ENCODE measurements at regions of chr6 and their contacts with region 1.

Region 1: DNA sequence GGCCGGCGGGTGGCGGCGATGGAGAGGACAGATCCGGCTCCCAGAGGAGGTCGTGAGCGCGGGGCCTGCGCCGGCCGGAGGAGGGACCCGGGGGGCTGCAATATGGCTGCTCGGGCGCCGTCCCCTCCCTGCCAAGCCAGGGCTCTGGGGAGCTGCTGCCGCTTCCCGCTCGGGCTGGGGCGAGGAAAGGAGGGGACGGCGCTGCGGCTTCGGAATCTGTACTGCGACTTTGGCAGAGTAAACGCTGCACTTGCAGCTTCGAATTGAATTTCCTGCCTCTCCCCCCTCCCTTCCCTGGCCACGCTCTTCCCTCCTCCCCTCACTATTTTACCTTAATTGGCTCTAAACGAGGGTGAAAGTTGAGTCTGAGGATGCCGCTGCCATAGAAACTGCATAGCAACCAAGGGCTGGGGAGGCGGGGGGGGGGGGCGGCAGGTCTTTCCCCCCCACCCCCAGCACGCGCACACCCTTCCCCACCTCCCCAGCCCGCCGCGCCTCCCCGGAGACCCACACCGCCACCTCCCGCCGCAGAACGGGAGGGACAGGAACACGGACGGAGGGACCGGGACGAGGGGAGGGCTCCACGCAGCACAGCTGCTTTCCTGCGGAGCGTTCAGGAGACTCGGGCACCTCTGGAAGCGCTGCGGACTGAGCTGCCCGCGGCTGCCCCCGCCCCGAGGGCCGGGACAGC is 93.9 kb downstream of the RNASET2 start:
- DNase-seq: peak; percentile 13 to 59 (median 34)
- ATAC-seq: peak; percentile 85
- H3K4me3 ChIP-seq: peak overlapping the region; percentile 47
- H3K4me3 Mint-ChIP-seq: peak overlapping the region; percentile 70 to 95 (median 90)
- H3K27ac ChIP-seq: peak overlapping the region; percentile 6
- H3K27ac Mint-ChIP-seq: peak overlapping the region in 4 of 9 donors; percentile 31 to 79 (median 62)
- H3K4me1 ChIP-seq: peaks cover 3 to 4% of the 10 kb centered on the region in 2 donors
- H3K4me1 Mint-ChIP-seq: peaks cover 7 to 24% (median 8%) of the 10 kb centered on the region in 7 donors
- H3K27me3 ChIP-seq: no peaks in the 10 kb centered on the region
- H3K27me3 Mint-ChIP-seq: peaks cover 0 to 40% (median 7%) of the 10 kb centered on the region in 5 donors

Region 2: DNA sequence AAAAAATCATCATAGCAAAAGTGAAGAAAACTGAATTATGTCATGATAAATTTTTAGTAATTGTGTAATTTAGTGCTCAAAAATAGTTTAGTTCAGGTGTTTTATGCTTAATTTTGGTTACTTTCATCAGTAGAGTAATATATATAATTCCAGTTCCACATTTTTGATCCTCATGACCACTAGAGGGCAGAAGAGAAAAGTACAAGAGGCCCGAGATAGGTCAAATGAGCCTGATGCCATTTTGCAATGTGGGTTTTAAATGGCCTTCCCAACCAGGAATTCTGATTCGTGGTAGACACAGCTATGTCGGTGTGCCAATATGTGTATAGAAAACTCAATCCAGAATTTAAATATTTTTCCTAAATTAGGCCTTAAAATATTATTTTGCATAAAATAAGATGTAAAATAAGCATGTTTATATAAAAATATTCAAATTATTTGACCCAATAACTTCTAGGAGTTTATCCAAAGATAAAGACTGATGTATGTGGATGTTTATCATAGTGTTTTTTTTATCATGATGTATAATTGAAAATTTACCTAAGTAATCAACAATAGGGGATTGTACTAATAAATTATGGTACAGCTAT is 75.6 kb before region 1 on chr6:
- CTCF ChIA-PET with region 1: no interaction called
- POLR2A ChIA-PET with region 1: no interaction called
- intact Hi-C with region 1: loop called in 1 of 2 experiments (anchors 1 kb)
- DNase-seq: peak in 7 of 9 donors; percentile 42 to 70 (median 59)
- ATAC-seq: peak; percentile 78
- H3K4me3 ChIP-seq: no peak overlapping the region
- H3K4me3 Mint-ChIP-seq: no peak overlapping the region
- H3K27ac ChIP-seq: no peak overlapping the region
- H3K27ac Mint-ChIP-seq: no peak overlapping the region
- H3K4me1 ChIP-seq: no peaks in the 10 kb centered on the region
- H3K4me1 Mint-ChIP-seq: no peaks in the 10 kb centered on the region
- H3K27me3 ChIP-seq: no peaks in the 10 kb centered on the region
- H3K27me3 Mint-ChIP-seq: peaks cover 0 to 13% (median 0%) of the 10 kb centered on the region in 5 donors

Region 3: GRCh38 chr6:166907373-166907841 is 45.0 kb after region 1 on chr6:
- CTCF ChIA-PET with region 1: no interaction called
- POLR2A ChIA-PET with region 1: no interaction called
- intact Hi-C with region 1: loop called in 1 of 2 experiments (anchors 5 kb)
- DNase-seq: peak in 3 of 9 donors; percentile 7 to 30 (median 14)
- ATAC-seq: peak; percentile 53
- H3K4me3 ChIP-seq: peak overlapping the region; percentile 27
- H3K4me3 Mint-ChIP-seq: peak overlapping the region; percentile 33 to 72 (median 56)
- H3K27ac ChIP-seq: no peak overlapping the region
- H3K27ac Mint-ChIP-seq: peak overlapping the region; percentile 36 to 89 (median 74)
- H3K4me1 ChIP-seq: peaks cover 9 to 14% of the 10 kb centered on the region in 2 donors
- H3K4me1 Mint-ChIP-seq: peaks cover 13 to 46% (median 25%) of the 10 kb centered on the region in 7 donors
- H3K27me3 ChIP-seq: no peaks in the 10 kb centered on the region
- H3K27me3 Mint-ChIP-seq: no peaks in the 10 kb centered on the region

Region 4: GRCh38 chr6:166950443-166950821 is 88.0 kb after region 1 on chr6:
- CTCF ChIA-PET with region 1: no interaction called
- POLR2A ChIA-PET with region 1: no interaction called
- intact Hi-C with region 1: loop called in 1 of 2 experiments (anchors 1 kb)
- DNase-seq: peak in 1 of 9 donors; percentile 31
- ATAC-seq: peak; percentile 12
- H3K4me3 ChIP-seq: peak overlapping the region; percentile 45
- H3K4me3 Mint-ChIP-seq: peak overlapping the region; percentile 51 to 95 (median 84)
- H3K27ac ChIP-seq: peak overlapping the region; percentile 92
- H3K27ac Mint-ChIP-seq: peak overlapping the region; percentile 91 to 99 (median 98)
- H3K4me1 ChIP-seq: peaks cover 28 to 63% of the 10 kb centered on the region in 2 donors
- H3K4me1 Mint-ChIP-seq: peaks cover 42 to 67% (median 64%) of the 10 kb centered on the region in 7 donors
- H3K27me3 ChIP-seq: no peaks in the 10 kb centered on the region
- H3K27me3 Mint-ChIP-seq: no peaks in the 10 kb centered on the region